Psoas muscle (tissue), 8 donors: ENCODE measurements at regions of chr17 and their contacts with region 1.

Region 1: GRCh38 chr17:42405963-42406495 is 17.0 kb downstream of the CAVIN1 start:
- DNase-seq: peak; percentile 88 to 92
- ATAC-seq: peak; percentile 58 to 73 (median 68)
- H3K4me3 ChIP-seq: peak overlapping the region; percentile 37
- H3K27ac ChIP-seq: peak overlapping the region; percentile 90
- H3K4me1 ChIP-seq: peaks cover 56% of the 10 kb centered on the region
- H3K27me3 ChIP-seq: no peaks in the 10 kb centered on the region
- CTCF ChIP-seq: peak; percentile 81

Region 2: DNA sequence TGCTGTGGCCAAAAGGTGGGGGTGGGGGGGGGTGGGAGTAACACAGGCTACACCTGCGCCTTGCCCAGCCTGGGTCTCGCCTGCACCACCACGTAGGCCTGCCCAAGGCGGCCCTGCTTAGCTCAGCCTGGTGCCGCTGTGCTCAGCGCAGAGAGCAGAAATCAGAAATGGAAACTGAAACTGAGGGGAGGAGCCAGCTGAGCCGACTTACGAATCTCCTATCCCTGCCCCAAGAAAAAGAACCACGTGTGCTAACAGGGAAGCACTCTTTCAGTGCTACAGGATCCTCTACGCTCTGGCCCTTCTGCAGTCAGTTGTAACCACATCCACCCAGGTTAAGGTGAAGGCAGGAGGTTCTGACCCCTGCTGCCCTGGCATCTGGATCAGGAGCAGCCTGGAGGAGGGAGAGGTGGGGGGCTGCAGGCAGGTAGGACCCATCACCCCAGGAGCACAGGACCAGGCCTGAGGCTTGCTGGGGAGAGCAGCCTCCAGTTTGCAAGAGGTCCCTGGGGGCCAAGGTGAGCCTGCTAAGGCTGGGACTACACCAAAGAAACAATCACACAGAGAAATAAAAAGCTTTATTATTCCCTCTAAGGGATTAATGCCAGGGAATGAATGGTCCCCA is 293.4 kb before region 1 on chr17 and contains the start of gene DHX58:
- intact Hi-C with region 1: loop called in 1 of 2 experiments (anchors 10 kb)
- DNase-seq: peak; percentile 63 to 81
- ATAC-seq: peak; percentile 53 to 85 (median 73)
- H3K4me3 ChIP-seq: peak within 1 kb of the TSS; percentile 73
- H3K27ac ChIP-seq: peak within 1 kb of the TSS; percentile 85
- H3K4me1 ChIP-seq: peaks cover 21% of the 10 kb centered on the region
- H3K27me3 ChIP-seq: no peaks in the 10 kb centered on the region
- CTCF ChIP-seq: no peak
- total RNA-seq, gene DHX58: 2.0 to 4.2 (median 3.1) TPM

Region 3: DNA sequence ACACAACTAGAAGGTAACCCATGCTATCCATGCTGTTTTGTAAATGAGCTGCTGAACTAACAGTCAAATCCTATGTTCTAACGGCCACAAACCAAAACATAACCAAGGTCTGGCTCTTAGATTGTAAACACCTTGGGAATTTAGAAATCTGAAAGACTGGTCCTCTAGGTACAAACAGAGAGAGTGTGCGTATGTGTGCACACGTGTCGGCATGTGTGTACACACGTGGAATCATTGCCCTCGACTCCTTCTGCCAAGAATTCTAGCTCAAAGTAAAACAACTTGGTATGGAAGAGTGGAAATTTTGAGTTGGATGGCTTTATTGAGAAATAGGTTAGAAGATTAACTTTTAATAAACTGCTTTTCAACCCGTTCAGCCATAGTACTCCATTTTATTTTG is 193.6 kb before region 1 on chr17:
- intact Hi-C with region 1: loop called in 1 of 2 experiments (anchors 10 kb)
- DNase-seq: no peak
- ATAC-seq: peak; percentile 11 to 31 (median 16)
- H3K4me3 ChIP-seq: peak overlapping the region; percentile 17
- H3K27ac ChIP-seq: peak overlapping the region; percentile 78
- H3K4me1 ChIP-seq: peaks cover 19% of the 10 kb centered on the region
- H3K27me3 ChIP-seq: no peaks in the 10 kb centered on the region
- CTCF ChIP-seq: no peak

Region 4: GRCh38 chr17:42312285-42313130 is 93.5 kb before region 1 on chr17:
- intact Hi-C with region 1: loop called in 1 of 2 experiments (anchors 2 kb)
- DNase-seq: peak; percentile 89 to 94
- ATAC-seq: peak; percentile 80 to 90 (median 86)
- H3K4me3 ChIP-seq: peak overlapping the region; percentile 51
- H3K27ac ChIP-seq: peak overlapping the region; percentile 88
- H3K4me1 ChIP-seq: peaks cover 21% of the 10 kb centered on the region
- H3K27me3 ChIP-seq: no peaks in the 10 kb centered on the region
- CTCF ChIP-seq: peak; percentile 62

Region 5: DNA sequence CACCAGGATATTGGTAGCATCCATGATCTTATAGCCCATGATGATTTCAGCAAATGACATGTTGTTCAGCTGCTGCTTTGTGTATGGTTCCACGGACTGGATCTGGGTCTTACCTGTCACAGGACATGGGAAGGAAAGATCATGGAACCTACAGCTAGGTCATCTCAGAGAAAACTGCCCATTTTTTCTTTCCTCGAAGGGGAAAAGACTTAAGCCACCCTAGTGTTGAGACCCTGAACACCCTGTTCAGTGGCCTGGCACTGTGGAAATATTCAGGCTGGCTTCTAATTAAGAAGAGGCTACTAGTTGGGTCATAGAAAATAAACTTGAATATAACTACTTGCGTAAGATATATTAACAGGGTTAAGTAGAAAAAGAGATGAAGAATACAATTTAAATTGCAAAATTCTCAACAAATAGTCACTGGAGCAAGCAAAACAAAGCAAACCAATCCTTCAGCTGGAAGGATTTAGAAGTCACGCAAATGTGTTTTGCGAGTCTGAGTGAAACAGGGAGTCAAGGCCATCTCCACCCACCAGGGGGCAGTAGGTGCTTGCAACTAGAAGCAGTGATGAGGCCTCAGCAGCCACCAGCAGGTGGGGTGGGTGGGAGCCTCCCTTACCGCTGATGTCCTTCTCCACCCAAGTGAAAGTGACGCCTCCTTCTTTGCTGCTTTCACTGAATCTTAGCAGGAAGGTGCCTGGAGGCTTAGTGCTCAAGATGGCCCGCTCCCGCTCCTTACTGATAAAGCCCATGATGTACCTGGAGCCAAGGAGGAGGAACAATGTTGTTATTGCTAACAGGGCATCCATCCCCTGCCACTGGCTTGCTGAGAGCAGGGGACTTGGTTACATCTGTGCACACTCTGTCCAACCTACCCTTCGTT is 83.4 kb before region 1 on chr17:
- intact Hi-C with region 1: loop called (anchors 1 to 2 kb)
- DNase-seq: peak; percentile 91 to 96
- ATAC-seq: peak; percentile 82 to 91 (median 86)
- H3K4me3 ChIP-seq: no peak overlapping the region
- H3K27ac ChIP-seq: no peak overlapping the region
- H3K4me1 ChIP-seq: peaks cover 5% of the 10 kb centered on the region
- H3K27me3 ChIP-seq: no peaks in the 10 kb centered on the region
- CTCF ChIP-seq: peak; percentile 99

Region 6: GRCh38 chr17:42388381-42389134 is 17.5 kb before region 1 on chr17 and contains the start of gene STAT3:
- intact Hi-C with region 1: loop called in 1 of 2 experiments (anchors 2 kb)
- DNase-seq: peak; percentile 100
- ATAC-seq: peak; percentile 94 to 97 (median 95)
- H3K4me3 ChIP-seq: peak within 1 kb of the TSS; percentile 92
- H3K27ac ChIP-seq: peak within 1 kb of the TSS; percentile 98
- H3K4me1 ChIP-seq: peaks cover 28% of the 10 kb centered on the region
- H3K27me3 ChIP-seq: no peaks in the 10 kb centered on the region
- CTCF ChIP-seq: no peak
- total RNA-seq, gene STAT3: 67.3 to 279 (median 220) TPM

Region 7: GRCh38 chr17:42517516-42517915 is 111.5 kb after region 1 on chr17:
- intact Hi-C with region 1: loop called in 1 of 2 experiments (anchors 5 kb)
- DNase-seq: peak; percentile 84 to 91
- ATAC-seq: peak; percentile 33 to 58 (median 50)
- H3K4me3 ChIP-seq: no peak overlapping the region
- H3K27ac ChIP-seq: peak overlapping the region; percentile 84
- H3K4me1 ChIP-seq: peaks cover 56% of the 10 kb centered on the region
- H3K27me3 ChIP-seq: no peaks in the 10 kb centered on the region
- CTCF ChIP-seq: peak; percentile 80